ENCODE measurements at regions of chr3 and their contacts with region 1.

Region 1: GRCh38 chr3:184250167-184250828 is 826 bp downstream of the EEF1AKMT4 start:
- DNase-seq: peak; percentile 89 to 90
- H3K4me3 ChIP-seq: peak overlapping the region; percentile 70 to 71
- H3K27ac ChIP-seq: peak overlapping the region; percentile 67 to 82
- H3K4me1 ChIP-seq: peaks cover 0 to 21% (median 17%) of the 10 kb centered on the region in 4 donors
- H3K27me3 ChIP-seq: no peaks in the 10 kb centered on the region
- CTCF ChIP-seq: peak; percentile 77 to 94

Region 2: GRCh38 chr3:183895296-183895695 is 355.0 kb before region 1 on chr3:
- intact Hi-C with region 1: loop called (anchors 10 kb)
- DNase-seq: no peak
- H3K4me3 ChIP-seq: no peak overlapping the region
- H3K27ac ChIP-seq: no peak overlapping the region
- H3K4me1 ChIP-seq: no peaks in the 10 kb centered on the region
- H3K27me3 ChIP-seq: peaks cover 0 to 22% of the 10 kb centered on the region in 2 donors
- CTCF ChIP-seq: peak; percentile 55 to 58

Region 3: GRCh38 chr3:184017672-184018423 is 232.4 kb before region 1 on chr3 and contains the start of gene ABCC5:
- intact Hi-C with region 1: loop called (anchors 10 kb)
- DNase-seq: peak; percentile 89 to 95
- H3K4me3 ChIP-seq: peak within 1 kb of the TSS; percentile 85 to 100
- H3K27ac ChIP-seq: peak within 1 kb of the TSS; percentile 70 to 78
- H3K4me1 ChIP-seq: peaks cover 0 to 16% (median 10%) of the 10 kb centered on the region in 4 donors
- H3K27me3 ChIP-seq: no peaks in the 10 kb centered on the region
- CTCF ChIP-seq: peak in 1 of 2 experiments; percentile 22

Region 4: DNA sequence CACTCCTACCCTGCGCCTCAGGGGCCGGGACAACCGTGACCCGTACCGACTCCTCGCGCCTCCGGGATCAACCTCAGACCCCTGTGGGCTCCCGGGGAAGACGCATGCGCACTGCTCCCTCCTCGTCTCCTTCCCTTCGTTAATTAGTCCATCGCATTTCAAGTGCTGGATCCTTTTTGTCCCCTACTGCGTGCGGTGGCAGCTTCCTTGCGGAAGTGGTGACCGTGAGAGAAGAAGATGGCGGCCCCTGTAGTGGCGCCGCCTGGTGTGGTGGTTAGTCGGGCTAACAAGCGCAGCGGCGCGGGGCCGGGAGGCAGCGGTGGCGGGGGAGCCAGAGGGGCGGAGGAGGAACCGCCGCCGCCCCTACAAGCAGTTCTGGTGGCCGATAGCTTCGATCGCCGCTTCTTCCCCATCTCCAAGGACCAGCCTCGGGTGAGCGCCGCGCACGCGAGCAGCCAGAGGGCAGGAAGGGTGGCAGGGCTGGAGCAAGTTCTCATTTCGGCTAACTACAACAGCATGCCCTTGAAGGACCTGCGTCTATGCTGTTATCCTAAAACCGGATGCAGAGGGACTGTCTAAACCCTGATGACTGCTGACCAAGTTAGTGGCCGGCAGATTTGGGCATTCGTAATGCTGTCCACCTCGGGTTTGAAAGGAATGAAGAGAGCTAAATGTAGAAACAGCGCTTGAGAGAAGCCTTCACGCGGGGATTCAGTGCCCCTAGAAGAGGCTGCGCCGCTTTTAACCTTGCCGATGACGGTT is 115.0 kb before region 1 on chr3 and contains the start of gene EIF2B5:
- intact Hi-C with region 1: loop called (anchors 5 kb)
- DNase-seq: peak; percentile 92 to 93
- H3K4me3 ChIP-seq: peak within 1 kb of the TSS; percentile 74 to 93
- H3K27ac ChIP-seq: peak within 1 kb of the TSS; percentile 86 to 95
- H3K4me1 ChIP-seq: peaks cover 0 to 25% (median 11%) of the 10 kb centered on the region in 4 donors
- H3K27me3 ChIP-seq: no peaks in the 10 kb centered on the region
- CTCF ChIP-seq: peak in 1 of 2 experiments; percentile 21

Region 5: GRCh38 chr3:184174646-184175492 is 75.4 kb before region 1 on chr3 and contains the start of gene AP2M1:
- intact Hi-C with region 1: loop called (anchors 2 kb)
- DNase-seq: peak; percentile 99
- H3K4me3 ChIP-seq: peak within 1 kb of the TSS; percentile 95 to 100
- H3K27ac ChIP-seq: peak within 1 kb of the TSS; percentile 97 to 99
- H3K4me1 ChIP-seq: peaks cover 0 to 37% (median 28%) of the 10 kb centered on the region in 4 donors
- H3K27me3 ChIP-seq: no peaks in the 10 kb centered on the region
- CTCF ChIP-seq: no peak

Region 6: GRCh38 chr3:184185461-184186308 is 64.6 kb before region 1 on chr3 and contains the start of gene ABCF3:
- intact Hi-C with region 1: loop called (anchors 5 kb)
- DNase-seq: peak; percentile 99 to 100
- H3K4me3 ChIP-seq: peak within 1 kb of the TSS; percentile 77 to 83
- H3K27ac ChIP-seq: peak within 1 kb of the TSS; percentile 87
- H3K4me1 ChIP-seq: peaks cover 0 to 30% (median 23%) of the 10 kb centered on the region in 4 donors
- H3K27me3 ChIP-seq: no peaks in the 10 kb centered on the region
- CTCF ChIP-seq: no peak